ENCODE measurements at regions of chr12 and their contacts with region 1.

Region 1: DNA sequence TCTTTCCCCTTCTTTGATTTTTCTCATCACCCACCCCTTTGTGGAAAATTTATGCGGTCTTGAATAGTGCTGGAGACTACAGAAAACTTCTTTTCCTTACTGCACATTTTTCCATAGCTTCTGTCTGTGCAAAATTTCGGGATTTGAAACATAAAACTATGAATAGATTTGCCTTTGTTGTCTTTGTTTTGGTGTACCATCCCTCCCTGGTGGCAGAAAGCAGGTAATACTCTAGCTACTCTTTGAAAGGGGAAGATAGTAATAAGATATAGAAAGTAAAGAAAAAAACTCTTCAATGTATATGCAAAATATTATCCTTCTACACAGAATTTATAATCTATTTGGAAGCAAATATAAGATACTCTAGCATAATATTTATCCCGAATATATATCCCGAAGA is 79.1 kb upstream of the LMO3 start:
- DNase-seq: no peak
- ATAC-seq: no peak
- H3K4me3 Mint-ChIP-seq: no peak overlapping the region
- H3K27ac Mint-ChIP-seq: no peak overlapping the region
- H3K4me1 Mint-ChIP-seq: 0 out of 2 replicates have a peak, but pooled peaks cover 3% of the 10 kb centered on the region
- H3K27me3 Mint-ChIP-seq: no peaks in the 10 kb centered on the region
- CTCF ChIP-seq: no peak

Region 2: GRCh38 chr12:16668198-16668597 is 16.9 kb before region 1 on chr12:
- CTCF ChIA-PET with region 1: interaction called, 11 read pairs
- POLR2A ChIA-PET with region 1: no interaction called
- DNase-seq: no peak
- ATAC-seq: peak; percentile 77
- H3K4me3 Mint-ChIP-seq: no peak overlapping the region
- H3K27ac Mint-ChIP-seq: no peak overlapping the region
- H3K4me1 Mint-ChIP-seq: peaks cover 10% of the 10 kb centered on the region
- H3K27me3 Mint-ChIP-seq: no peaks in the 10 kb centered on the region
- CTCF ChIP-seq: no peak

Measured in WTC11 (cell line).